A549 (cell line): ENCODE measurements at regions of chr20 and their contacts with region 1.

Region 1: DNA sequence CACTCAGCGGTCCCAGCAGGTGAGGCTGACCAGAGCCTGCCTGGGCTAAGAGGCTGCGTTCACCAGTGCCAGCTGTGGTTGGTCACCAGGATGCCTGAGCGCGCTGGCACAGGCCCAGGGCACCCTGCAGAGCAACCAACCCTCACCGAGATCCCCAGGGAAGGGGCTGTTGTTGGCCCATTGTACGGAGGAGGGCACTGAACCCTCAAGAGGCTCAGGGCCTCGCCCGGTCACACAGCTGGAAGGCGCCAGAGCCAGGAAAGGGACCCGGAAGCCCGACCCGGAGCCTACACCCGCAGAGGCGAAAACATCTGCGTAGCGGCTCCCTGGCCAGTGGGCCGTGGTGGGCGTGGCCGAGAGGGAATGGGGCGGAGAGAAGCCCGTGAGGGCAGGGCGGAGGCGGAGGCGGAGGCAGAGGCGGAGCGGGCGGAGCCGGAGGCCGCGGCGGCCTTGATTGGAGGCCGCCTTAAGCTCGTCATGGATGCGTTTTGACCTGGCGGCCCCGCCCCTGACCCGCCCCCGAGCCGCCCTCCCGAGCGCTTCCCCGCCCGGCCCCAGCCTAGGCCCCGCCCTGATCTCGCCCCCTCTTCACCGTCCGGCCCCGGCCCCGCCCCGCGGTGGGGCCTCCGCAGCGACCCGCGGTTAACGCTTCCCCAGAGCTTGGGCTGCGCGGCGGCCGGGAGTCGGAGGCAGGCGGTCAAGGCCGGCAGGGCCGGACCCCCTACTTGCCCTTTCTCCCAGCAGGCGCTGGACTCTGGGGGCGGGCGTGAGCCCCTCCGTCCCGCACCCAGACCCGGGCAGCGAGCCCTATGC is 2.2 kb upstream of the MRGBP start:
- DNase-seq: peak; percentile 93 to 97
- ATAC-seq: peak; percentile 65 to 83
- H3K4me3 ChIP-seq: peak overlapping the region; percentile 64
- H3K27ac ChIP-seq: peak overlapping the region; percentile 92 to 100
- H3K4me1 ChIP-seq: peaks cover 29% of the 10 kb centered on the region
- CTCF ChIP-seq: no peak
- EP300 ChIP-seq: no peak
- POLR2A ChIP-seq: peak; percentile 67
- RAD21 ChIP-seq: no peak

Region 2: DNA sequence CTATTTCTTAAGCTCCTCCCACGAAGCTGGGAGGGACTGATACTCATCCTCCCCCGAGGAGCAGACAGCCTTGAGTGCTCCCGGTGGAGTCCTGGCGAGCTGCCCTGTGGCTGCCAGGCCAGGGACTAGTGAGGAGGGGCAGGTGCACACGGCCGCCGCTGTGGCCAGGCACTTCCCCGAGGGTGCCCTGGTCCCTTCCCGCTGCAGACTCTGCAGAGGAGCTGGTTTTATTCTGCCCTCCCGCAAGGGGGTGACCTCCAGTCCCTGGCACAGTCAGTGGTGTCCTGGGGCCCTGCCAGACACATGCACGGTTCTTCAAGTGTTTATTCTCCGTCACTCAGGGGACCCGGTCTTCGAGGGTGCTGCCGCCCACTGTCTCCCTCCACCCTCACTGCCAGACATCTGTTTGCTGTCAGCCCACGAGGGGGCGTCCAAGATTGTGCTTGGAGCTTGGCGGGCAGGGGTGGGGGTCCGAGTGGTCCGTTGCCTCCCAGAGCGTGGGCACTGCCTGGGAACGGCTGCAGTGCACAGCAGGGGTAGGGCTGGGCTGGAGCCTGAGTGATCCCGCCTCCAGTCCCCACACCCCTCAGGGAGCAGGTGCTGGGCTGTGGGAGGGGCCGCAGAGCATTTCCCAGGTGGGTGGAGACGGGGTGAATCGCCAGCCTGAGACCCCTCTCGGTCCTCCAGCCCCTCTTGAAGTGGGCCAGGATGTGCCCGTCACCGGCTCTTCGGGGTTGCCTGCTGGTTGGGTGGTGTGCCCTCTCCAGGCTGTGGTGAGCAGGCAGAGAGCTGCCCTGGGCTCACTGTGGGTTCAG is 384.0 kb before region 1 on chr20:
- CTCF ChIA-PET with region 1: interaction called, 17 read pairs
- POLR2A ChIA-PET with region 1: interaction called, 3 read pairs
- DNase-seq: peak; percentile 49 to 51
- ATAC-seq: peak; percentile 27 to 47; a peak in 5 of 6 replicates
- H3K4me3 ChIP-seq: 0 out of 3 replicates have a peak overlapping the region, but pooled peaks have one; percentile 7
- H3K27ac ChIP-seq: peak overlapping the region in 1 of 2 experiments; percentile 30; a peak in 2 of 6 replicates
- H3K4me1 ChIP-seq: peaks cover 21% of the 10 kb centered on the region
- CTCF ChIP-seq: peak; percentile 61
- EP300 ChIP-seq: no peak
- POLR2A ChIP-seq: no peak
- RAD21 ChIP-seq: peak; percentile 56 to 64

Region 3: DNA sequence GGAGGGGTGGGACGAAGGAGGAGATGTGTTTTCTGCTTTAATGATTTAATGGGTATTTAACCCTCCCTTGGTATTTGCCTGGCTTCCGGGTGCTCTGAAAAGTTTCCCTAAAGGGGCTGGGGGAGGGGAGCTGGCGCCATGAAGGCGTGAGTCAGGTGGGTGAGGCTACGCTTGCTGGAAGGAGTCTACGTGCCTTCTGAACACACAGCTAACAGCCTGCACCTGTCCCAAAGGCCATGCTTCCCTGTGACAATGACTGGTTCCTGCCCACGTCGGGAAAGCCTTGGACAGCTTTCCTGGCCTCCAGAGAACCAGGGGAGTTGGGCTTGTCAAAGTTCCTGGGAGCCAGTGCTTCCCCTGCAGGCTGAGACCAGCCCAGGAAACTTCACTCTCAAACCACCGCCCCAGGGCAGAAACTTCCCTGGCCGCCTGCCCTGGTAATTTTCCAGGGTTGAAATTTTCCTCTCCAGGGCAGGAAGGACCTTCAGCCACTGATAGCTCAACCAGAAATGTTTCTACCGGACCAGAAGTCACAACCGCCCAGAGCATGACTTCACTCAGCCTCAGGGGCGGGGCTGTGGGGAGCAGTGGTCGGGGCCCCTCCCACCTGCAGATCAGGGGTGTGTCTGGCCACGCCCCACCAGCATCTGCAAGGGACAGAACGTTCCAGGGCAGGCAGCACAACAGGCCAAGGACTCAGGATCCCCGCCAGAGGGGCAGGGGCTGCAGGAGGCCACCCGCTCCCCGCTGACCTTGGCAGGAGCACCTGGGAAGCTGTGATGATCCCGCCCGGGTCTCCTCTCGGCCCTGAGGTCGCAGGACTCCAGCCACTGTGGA is 170.4 kb before region 1 on chr20:
- CTCF ChIA-PET with region 1: interaction called, 16 read pairs
- POLR2A ChIA-PET with region 1: interaction called, 6 read pairs
- DNase-seq: peak; percentile 83 to 98
- ATAC-seq: peak; percentile 78 to 92
- H3K4me3 ChIP-seq: peak overlapping the region; percentile 14; the same call in 1 of the 3 replicates
- H3K27ac ChIP-seq: peak overlapping the region; percentile 88 to 91
- H3K4me1 ChIP-seq: peaks cover 34% of the 10 kb centered on the region
- CTCF ChIP-seq: no peak
- EP300 ChIP-seq: no peak
- POLR2A ChIP-seq: peak; percentile 48
- RAD21 ChIP-seq: no peak

Region 4: DNA sequence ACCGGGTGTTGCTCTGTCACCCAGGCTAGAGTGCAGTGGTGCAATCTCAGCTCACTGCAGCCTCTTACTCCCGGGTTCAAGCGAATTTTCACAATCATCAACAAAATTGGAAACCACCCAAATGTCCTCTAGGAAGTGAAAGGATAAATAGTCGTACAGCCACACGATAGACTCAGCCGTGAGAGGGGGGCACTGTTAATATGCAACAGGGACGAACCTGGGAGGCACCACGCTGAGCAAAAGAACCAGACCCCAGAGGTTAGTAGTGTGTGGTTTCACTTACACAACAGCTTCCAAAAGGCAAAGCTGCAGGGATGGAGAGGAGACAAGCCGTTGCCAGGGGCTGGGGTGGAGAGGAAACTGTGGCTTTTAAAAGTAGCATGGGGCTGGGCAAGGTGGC is 115.6 kb before region 1 on chr20:
- CTCF ChIA-PET with region 1: interaction called, 311 read pairs
- POLR2A ChIA-PET with region 1: no interaction called
- DNase-seq: no peak
- ATAC-seq: no peak
- H3K4me3 ChIP-seq: no peak overlapping the region
- H3K27ac ChIP-seq: no peak overlapping the region
- H3K4me1 ChIP-seq: no peaks in the 10 kb centered on the region
- CTCF ChIP-seq: no peak
- EP300 ChIP-seq: no peak
- POLR2A ChIP-seq: no peak
- RAD21 ChIP-seq: no peak

Region 5: DNA sequence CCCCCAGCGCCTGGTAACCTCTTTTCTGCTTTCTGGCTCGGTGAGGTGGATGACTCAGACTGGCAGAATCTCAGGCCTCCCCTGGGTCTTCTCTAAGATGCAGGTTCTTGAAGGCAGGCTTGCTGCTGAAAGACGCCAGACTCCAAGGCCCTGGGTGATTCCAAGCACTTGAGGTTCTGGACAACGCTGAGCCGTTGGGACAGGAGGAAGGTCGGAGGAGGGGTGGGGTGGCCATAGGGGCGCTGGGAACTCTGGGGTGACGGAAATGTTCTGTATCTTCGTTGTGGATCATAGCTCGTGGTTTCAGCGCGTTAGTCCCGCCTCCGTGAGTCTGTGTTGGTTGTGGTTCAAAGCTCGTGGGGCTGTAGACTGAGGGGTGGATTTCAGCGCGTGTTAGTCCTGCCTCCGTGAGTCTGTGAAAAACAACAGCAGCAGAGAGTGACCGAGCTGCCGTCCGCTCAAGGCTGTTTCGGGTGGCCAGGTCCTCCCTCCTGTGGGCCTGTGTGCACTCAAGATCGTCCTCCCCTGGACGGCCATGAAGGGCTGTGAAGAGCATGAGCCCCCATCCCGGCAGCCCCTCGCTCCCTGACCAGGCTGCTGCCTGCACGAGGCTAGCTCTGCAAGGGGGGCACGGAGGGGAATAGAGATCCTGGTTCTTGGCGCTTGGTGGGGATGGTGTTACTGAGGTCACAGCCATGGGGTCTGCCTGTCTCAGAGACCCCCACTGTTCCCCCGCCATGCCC is 77.7 kb before region 1 on chr20:
- CTCF ChIA-PET with region 1: interaction called, 250 read pairs
- POLR2A ChIA-PET with region 1: no interaction called
- DNase-seq: no peak
- ATAC-seq: no peak; a peak in 1 of 6 replicates
- H3K4me3 ChIP-seq: no peak overlapping the region
- H3K27ac ChIP-seq: no peak overlapping the region
- H3K4me1 ChIP-seq: no peaks in the 10 kb centered on the region; the same call in 2 of the 3 replicates
- CTCF ChIP-seq: no peak
- EP300 ChIP-seq: no peak
- POLR2A ChIP-seq: no peak
- RAD21 ChIP-seq: no peak

Region 6: DNA sequence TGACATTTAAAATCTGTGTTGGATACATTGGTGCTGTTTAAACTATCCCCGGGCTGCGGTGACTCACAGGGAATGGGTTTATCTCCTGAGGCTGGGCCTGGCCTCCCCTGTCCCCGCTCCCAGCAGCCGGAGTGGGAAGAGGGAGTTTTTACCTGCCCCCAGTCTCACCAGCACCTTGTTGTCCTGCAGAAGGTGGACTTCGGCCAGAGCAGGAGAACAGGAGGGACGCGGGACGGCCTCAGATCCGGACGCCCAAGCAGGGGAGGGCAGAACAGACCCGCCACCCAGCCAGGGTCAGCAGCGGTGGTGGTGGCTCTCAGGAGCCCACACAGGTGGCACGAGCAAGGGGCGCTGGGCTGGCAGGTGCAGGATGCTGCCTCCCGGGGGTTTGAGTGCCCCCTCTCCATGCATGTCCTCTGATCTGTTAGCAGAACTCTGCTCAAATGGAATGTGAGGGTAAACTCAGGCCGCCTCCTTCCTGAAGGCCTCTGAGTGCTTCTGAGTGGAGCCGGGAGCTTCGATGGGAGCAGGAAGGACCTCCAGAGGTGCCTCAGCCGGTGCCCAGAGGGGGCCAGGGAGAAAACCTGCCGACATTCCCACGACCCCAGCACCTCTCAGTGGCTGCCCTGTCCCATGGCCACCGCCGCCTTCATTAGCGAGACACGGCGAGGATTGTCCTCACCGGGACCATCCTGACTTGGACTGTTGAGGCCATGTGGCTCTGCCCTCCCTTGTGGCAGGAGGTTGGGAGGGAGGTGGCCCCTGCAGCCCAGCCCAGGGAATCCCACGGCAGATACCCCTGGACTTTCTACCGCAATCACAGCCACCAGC is 41.2 kb before region 1 on chr20:
- CTCF ChIA-PET with region 1: interaction called, 22 read pairs
- POLR2A ChIA-PET with region 1: no interaction called
- DNase-seq: no peak
- ATAC-seq: peak in 1 of 2 experiments; percentile 25; a peak in 3 of 6 replicates
- H3K4me3 ChIP-seq: no peak overlapping the region
- H3K27ac ChIP-seq: peak overlapping the region in 1 of 2 experiments; percentile 16; a peak in 1 of 6 replicates
- H3K4me1 ChIP-seq: peaks cover 3% of the 10 kb centered on the region; the same call in 1 of the 3 replicates
- CTCF ChIP-seq: no peak
- EP300 ChIP-seq: no peak
- POLR2A ChIP-seq: no peak
- RAD21 ChIP-seq: no peak